AG04450 (cell line): ENCODE measurements at regions of chr10 and their contacts with region 1.

Region 1: DNA sequence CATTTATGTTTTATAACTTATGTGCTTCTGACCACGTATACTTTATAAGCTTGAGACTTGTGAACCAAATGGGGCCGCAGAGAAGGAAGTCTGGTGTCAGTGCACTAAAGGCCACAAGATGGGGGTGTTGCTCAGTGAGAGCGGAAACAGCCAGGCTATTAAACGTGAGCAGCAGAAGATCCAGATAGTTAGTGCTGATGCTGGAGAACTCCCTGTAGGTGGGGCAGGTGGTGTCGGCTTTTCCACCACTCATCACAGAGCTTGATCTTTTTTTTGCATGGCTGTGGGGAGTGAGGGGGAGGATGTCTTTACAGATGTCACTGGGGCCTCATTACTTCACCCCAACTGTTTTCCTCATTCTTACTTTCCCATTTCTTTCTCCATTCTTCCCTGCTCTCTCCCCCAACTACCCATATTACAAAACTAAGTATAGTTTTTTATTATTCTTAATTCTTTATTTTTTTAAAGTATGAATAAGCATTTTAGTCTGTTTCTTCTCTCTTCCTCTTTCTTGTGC is 34.7 kb downstream of the ACADSB start:
- DNase-seq: peak; percentile 23
- H3K4me3 ChIP-seq: no peak overlapping the region
- H3K27ac ChIP-seq: no peak overlapping the region
- H3K27me3 ChIP-seq: no peaks in the 10 kb centered on the region
- CTCF ChIP-seq: peak; percentile 86

Region 2: DNA sequence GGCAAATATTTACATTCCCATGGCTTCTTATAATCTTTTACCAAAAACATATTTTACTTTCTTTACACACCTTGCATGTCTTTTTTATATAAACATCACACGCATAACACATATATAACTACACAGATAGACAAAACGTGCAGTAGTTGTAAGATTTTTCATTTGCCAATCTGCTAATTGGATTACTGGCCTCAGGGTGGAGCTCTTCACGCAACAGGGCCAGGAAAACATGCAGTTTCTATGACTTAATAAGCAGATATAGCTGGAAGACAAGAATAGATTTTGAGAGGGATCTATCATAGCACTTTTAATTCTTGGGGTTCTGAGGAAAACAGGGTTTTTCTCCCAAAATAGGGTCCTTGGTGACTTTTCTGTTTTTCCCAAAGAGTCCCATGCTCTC is 21.9 kb before region 1 on chr10:
- CTCF ChIA-PET with region 1: interaction called, 17 read pairs
- POLR2A ChIA-PET with region 1: no interaction called
- DNase-seq: no peak
- H3K4me3 ChIP-seq: no peak overlapping the region
- H3K27ac ChIP-seq: no peak overlapping the region
- H3K27me3 ChIP-seq: no peaks in the 10 kb centered on the region
- CTCF ChIP-seq: peak; percentile 49

Region 3: DNA sequence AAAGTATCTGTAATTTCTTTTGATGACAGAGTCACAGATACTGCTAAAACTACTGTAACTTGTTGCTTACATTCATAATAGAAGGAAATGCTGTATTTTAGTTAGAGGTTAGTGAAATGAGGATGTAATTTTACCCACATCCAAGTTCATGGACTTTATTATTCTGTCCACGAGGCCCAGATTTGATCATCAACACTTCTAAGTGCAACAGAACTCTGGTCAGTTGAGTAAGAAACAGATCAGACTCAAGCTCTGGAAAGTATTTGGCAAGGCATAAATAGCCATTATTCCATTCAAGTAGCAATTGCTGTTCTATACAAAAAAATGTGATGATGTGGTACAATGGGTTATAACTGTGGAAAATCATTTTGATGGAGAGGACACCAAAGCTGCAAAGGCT is 12.3 kb before region 1 on chr10:
- CTCF ChIA-PET with region 1: interaction called, 21 read pairs
- POLR2A ChIA-PET with region 1: no interaction called
- DNase-seq: no peak
- H3K4me3 ChIP-seq: no peak overlapping the region
- H3K27ac ChIP-seq: no peak overlapping the region
- H3K27me3 ChIP-seq: no peaks in the 10 kb centered on the region
- CTCF ChIP-seq: no peak

Region 4: GRCh38 chr10:123057968-123058367 is 14.5 kb after region 1 on chr10:
- CTCF ChIA-PET with region 1: interaction called, 17 read pairs
- POLR2A ChIA-PET with region 1: no interaction called
- DNase-seq: no peak
- H3K4me3 ChIP-seq: no peak overlapping the region
- H3K27ac ChIP-seq: no peak overlapping the region
- H3K27me3 ChIP-seq: no peaks in the 10 kb centered on the region
- CTCF ChIP-seq: no peak

Region 5: DNA sequence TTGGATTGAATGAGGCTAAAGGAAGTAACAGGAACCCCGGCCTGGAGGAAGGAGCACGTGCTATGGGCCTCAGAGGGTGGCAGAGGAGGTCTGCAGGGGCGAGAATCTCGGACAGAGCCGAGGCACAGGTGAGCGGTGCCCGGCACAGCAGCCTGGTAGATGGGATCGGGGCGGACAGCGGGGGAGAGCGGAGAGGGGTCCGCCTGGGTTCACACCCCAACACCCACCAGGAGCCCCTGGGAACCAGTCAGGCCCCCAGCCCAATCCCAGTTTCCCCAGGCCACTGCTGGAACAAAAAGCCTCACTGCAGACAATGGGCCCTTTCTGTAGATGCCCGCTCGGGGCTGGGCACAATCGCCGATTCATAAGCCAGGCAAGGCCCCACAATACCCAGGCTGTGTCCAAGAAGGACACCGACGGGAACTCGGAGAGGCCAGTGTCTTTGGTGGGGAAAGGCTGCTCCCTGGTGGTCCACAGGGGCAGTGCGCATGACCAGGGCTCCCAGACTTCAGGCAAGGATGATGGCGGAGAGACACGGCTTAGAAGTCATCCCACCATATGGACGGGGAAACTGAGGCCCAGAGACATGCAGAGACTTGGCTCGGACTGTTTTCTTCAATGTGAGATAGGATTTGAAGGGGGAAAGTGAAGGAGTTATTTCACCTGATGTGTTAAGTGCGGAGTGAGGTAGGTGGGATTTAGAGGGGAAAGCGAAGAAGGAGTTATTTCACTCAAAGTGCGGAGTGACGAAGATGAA is 515.8 kb after region 1 on chr10:
- CTCF ChIA-PET with region 1: interaction called, 13 read pairs
- POLR2A ChIA-PET with region 1: no interaction called
- DNase-seq: no peak
- H3K4me3 ChIP-seq: no peak overlapping the region
- H3K27ac ChIP-seq: no peak overlapping the region
- H3K27me3 ChIP-seq: no peaks in the 10 kb centered on the region
- CTCF ChIP-seq: peak; percentile 88

Region 6: GRCh38 chr10:123848564-123849457 is 805.3 kb after region 1 on chr10:
- CTCF ChIA-PET with region 1: no interaction called
- POLR2A ChIA-PET with region 1: no interaction called
- DNase-seq: no peak
- H3K4me3 ChIP-seq: no peak overlapping the region
- H3K27ac ChIP-seq: no peak overlapping the region
- H3K27me3 ChIP-seq: no peaks in the 10 kb centered on the region
- CTCF ChIP-seq: no peak